PC-3 (cell line): ENCODE measurements at regions of chr3 and their contacts with region 1.

Region 1: DNA sequence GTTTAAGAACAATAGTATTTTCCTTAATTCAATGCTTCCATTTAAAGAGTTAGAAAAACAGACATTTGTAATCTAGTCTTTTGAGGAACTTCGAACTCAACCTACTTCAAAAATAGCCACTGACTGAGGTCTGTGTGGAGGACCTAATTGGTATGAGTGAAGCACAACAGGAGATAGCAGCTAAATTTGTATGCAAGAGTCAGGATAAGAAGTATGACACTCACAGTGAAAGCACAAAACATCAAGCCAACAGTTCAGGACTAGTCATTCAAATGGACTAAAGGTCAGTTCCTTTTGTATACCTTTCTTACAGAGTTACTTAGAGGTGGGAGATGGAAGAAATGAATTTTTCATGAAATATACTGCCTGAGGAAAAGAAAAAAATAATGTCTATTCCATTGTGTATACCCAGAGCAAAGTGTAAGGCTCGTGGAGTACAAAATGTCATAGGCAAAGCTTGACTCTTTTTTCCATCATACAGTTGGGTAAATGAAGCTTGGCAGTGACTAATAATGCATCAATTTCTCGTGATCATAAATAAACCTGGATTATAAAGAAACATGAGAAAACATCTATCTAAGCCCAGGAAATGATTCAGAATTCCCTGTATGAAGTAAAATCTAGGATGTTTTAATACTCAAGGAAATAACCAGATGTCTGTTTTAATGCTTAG is 1005.2 kb upstream of the CADM2 start:
- DNase-seq: peak; percentile 85
- ATAC-seq: peak; percentile 96
- H3K4me3 ChIP-seq: peak overlapping the region; percentile 8; the same call in 1 of the 2 replicates
- H3K27ac ChIP-seq: peak overlapping the region; percentile 85
- H3K4me1 ChIP-seq: peaks cover 19% of the 10 kb centered on the region
- H3K27me3 ChIP-seq: no peaks in the 10 kb centered on the region
- CTCF ChIP-seq: no peak

Region 2: GRCh38 chr3:84082726-84083125 is 129.2 kb after region 1 on chr3:
- CTCF ChIA-PET with region 1: no interaction called
- POLR2A ChIA-PET with region 1: no interaction called
- intact Hi-C with region 1: loop called (anchors 5 kb)
- DNase-seq: peak; percentile 81
- ATAC-seq: peak; percentile 100
- H3K4me3 ChIP-seq: no peak overlapping the region
- H3K27ac ChIP-seq: peak overlapping the region; percentile 25; the same call in 1 of the 2 replicates
- H3K4me1 ChIP-seq: peaks cover 13% of the 10 kb centered on the region
- H3K27me3 ChIP-seq: no peaks in the 10 kb centered on the region
- CTCF ChIP-seq: no peak